ENCODE measurements at regions of chr1 and their contacts with region 1.

Region 1: DNA sequence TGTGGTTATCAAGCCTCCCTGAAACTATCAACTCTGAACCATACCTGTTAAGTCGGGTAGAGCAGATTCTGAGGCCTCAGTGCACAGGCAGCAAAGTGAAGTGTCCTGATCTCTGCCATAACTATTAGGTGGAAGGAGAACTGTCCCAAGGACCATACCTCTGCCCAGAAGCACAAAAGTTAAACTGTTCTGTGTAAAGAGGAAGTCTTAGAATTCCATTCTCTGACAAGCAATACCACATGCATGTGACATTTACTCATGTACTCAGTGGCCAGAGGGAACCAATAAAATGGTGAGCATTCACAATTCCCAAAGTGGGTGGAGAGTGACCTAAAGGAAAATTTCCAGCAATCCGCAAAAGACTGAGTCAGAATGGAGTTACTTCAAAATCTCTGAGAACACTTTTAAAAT is 61.0 kb downstream of the TOR3A start:
- DNase-seq: peak; percentile 99
- ATAC-seq: peak; percentile 88
- H3K4me3 ChIP-seq: peak overlapping the region; percentile 56
- H3K27ac ChIP-seq: peak overlapping the region; percentile 88
- H3K4me1 ChIP-seq: peaks cover 11% of the 10 kb centered on the region
- H3K27me3 ChIP-seq: no peaks in the 10 kb centered on the region
- CTCF ChIP-seq: no peak
- POLR2A ChIP-seq: peak; percentile 99
- RAD21 ChIP-seq: peak; percentile 24; the same call in 1 of the 2 replicates

Region 2: DNA sequence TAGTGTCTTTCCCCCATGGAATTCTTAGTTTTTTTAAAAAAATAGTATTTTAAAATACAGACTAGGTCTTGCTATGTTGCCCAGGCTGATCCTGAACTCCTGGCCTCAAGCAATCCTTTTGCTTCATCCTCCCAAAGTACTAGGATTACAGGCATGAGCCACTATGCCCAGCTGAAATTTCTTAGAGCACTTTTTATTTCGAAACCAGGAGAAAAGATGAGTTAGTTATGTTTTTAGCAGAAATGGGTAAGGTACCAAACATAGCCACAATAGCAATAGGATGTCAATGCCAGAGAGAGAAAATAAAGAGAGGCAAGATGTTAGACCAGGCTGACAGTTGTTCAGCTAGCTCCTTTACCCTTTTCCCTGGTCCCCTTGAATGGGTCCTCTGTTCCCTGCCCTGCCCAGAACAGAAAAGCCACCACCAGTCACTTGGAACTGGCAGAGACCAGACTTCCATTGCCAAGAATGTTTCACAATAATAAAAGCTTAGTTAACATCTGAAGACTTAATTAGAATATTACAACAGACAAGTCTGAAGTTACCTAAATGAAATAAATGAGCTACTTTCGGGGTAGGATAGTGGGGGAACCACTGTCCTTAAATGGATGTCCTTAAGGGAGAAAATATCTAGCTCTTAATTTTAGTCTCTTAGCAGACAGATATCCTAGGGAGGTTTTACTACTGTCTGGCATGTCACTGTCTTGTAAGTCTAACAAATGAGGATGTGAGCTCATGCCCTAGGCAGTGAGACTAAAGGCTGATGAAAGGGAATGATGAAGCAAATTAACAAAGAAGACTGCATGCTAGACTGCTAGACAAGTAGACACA is 32.3 kb after region 1 on chr1:
- CTCF ChIA-PET with region 1: no interaction called
- POLR2A ChIA-PET with region 1: no interaction called
- dilution Hi-C with region 1: no loop called
- in situ Hi-C with region 1: no loop called
- intact Hi-C with region 1: loop called (anchors 5 kb)
- DNase-seq: peak; percentile 55
- ATAC-seq: peak; percentile 22
- H3K4me3 ChIP-seq: no peak overlapping the region
- H3K27ac ChIP-seq: peak overlapping the region; percentile 47; the same call in 1 of the 2 replicates
- H3K4me1 ChIP-seq: peaks cover 16% of the 10 kb centered on the region
- H3K27me3 ChIP-seq: no peaks in the 10 kb centered on the region
- CTCF ChIP-seq: no peak
- POLR2A ChIP-seq: no peak
- RAD21 ChIP-seq: no peak

Region 3: GRCh38 chr1:179393721-179394120 is 250.8 kb after region 1 on chr1:
- CTCF ChIA-PET with region 1: no interaction called
- POLR2A ChIA-PET with region 1: no interaction called
- dilution Hi-C with region 1: no loop called
- in situ Hi-C with region 1: no loop called
- intact Hi-C with region 1: no loop called
- DNase-seq: no peak
- ATAC-seq: no peak
- H3K4me3 ChIP-seq: no peak overlapping the region
- H3K27ac ChIP-seq: no peak overlapping the region
- H3K4me1 ChIP-seq: no peaks in the 10 kb centered on the region
- H3K27me3 ChIP-seq: no peaks in the 10 kb centered on the region
- CTCF ChIP-seq: no peak
- POLR2A ChIP-seq: no peak
- RAD21 ChIP-seq: no peak

Measured in IMR-90 (cell line).